Sigmoid colon (tissue), 7 donors: ENCODE measurements at regions of chr2 and their contacts with region 1.

Region 1: DNA sequence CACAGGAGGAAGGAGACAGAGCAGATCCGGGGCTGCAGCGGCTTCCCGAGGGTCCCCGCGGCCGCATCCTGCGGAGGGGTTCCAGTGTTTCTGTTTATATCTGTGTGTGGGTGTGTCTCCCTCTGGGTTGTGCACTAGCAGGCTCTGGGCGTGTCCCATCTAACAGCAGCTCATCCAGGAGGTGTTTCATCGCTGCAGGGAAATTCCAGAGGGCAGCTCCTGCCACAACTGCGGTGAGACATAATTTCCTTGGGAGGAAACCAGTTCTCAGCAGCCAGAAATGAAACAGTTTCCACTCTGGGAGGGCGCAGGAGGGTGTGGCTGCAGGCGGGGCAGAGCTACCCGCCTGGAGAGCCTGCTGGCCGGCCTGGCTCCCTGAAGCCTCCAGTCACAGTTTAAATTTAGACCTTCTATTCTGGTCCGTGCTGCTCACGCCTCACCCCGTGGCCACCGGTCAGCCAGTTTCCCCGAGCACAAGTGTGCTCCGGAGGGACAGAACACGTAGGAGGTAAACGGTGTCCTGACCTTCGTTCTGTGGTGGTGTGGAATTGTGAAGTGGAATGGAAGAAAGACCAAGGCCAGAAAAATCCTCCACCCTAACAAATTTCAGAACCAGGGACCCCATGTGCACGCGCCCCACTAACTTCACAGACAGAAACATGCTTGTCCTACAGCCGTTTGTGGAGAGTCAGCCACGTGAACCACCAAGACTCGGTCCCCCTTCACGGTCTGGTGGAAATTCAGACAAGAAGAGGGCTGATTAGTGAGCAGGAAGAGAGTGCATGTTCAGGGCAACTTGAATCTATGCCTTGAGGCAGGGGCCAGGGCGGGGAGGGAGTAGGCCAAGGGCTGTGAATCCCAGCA is 50.2 kb downstream of the TEX44 start:
- DNase-seq: peak; percentile 95
- H3K4me3 ChIP-seq: peak overlapping the region in 3 of 4 donors; percentile 18 to 38 (median 26)
- H3K27ac ChIP-seq: peak overlapping the region; percentile 84 to 96 (median 91)
- H3K4me1 ChIP-seq: peaks cover 0 to 31% (median 29%) of the 10 kb centered on the region in 4 donors
- H3K27me3 ChIP-seq: no peaks in the 10 kb centered on the region
- CTCF ChIP-seq: no peak
- EP300 ChIP-seq: peak in 2 of 4 donors; percentile 67 to 81
- POLR2A ChIP-seq: peak; percentile 28 to 47

Region 2: DNA sequence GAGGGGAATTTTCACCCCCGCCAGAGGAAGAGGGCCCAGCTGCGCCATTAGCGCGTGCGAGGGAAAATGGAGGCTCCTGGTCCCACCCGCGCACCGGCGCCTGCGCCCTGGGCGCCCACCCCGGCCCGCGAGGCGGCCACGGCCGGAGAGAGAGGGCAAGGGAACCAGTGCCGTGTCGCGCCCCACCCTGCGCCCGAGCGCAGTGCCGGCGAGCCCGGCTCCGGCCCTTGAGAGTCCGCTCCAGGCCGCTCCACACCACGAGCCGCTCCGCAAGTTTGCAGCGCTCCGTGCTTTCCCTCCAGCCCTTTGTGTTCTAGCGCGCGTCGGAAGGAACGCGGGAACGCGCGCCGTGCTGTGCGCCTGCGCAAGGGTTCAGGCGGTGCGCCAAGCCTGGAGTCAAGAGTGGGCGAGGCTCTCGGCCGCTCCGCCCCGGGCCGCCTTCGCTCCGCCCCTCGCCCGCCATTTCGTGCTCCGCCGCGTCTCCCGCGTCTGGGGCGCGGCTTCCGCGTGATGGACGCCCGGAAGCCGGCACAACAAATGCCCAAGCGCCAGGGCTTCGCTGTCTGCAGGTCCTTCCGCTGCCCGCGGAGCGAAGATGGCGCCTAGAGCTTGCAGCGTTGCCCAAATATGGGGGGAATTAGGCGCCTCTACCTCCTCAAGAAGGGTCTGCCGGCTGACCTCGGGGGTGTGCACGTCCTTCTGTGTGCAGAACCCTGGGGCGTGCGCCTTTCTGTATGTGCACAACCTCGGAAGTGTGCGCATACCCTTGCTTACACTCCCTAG is 19.4 kb after region 1 on chr2:
- intact Hi-C with region 1: loop called (anchors 1 kb)
- DNase-seq: peak; percentile 98
- H3K4me3 ChIP-seq: peak overlapping the region; percentile 24 to 49 (median 43)
- H3K27ac ChIP-seq: peak overlapping the region; percentile 95 to 99 (median 97)
- H3K4me1 ChIP-seq: peaks cover 4 to 40% (median 30%) of the 10 kb centered on the region in 4 donors
- H3K27me3 ChIP-seq: no peaks in the 10 kb centered on the region
- CTCF ChIP-seq: peak in 1 of 4 experiments; percentile 8
- EP300 ChIP-seq: peak in 1 of 4 donors; percentile 81
- POLR2A ChIP-seq: peak in 1 of 2 donors; percentile 66